ENCODE measurements at regions of chr12 and their contacts with region 1.

Region 1: DNA sequence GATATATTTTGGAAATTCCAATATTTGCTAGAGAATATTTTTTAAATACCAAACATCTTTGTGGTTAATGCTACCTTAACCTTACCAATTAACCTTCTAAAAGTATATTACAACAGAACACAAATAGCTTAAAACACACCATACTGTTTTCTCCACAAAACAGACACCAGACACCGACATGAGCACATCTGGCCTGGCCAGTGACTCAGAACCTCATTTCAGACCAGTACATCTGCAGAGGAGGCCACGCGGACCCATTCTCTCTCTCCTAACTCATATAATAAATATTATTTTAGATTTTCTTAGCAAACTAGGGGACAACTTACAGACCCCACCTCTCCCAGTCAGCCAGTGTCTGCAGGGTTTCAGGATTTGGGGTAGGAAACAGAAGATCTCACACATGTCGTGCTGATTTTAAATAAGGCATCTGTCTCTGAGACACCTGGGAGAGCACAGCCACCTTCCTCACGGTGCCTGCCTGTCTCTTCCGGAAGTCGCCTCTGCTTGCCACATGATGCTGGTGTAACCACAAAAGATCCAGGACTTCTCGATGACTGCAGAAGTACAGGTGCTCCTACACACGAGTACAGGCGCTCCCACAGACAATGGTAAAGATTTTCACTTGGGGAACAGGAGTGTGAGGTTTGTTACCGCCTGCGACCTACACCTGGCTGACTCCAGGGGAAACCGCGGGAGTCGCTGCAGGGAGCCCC is 9.7 kb upstream of the ANKLE2 start:
- DNase-seq: peak in 8 of 9 donors; percentile 38 to 82 (median 76)
- ATAC-seq: peak; percentile 80
- H3K4me3 ChIP-seq: no peak overlapping the region
- H3K4me3 Mint-ChIP-seq: peak overlapping the region; percentile 66 to 82 (median 73)
- H3K27ac ChIP-seq: peak overlapping the region; percentile 69
- H3K27ac Mint-ChIP-seq: peak overlapping the region; percentile 62 to 93 (median 84)
- H3K4me1 ChIP-seq: peaks cover 4 to 68% of the 10 kb centered on the region in 2 donors
- H3K4me1 Mint-ChIP-seq: peaks cover 29 to 89% (median 73%) of the 10 kb centered on the region in 7 donors
- H3K27me3 ChIP-seq: no peaks in the 10 kb centered on the region
- H3K27me3 Mint-ChIP-seq: no peaks in the 10 kb centered on the region

Region 2: DNA sequence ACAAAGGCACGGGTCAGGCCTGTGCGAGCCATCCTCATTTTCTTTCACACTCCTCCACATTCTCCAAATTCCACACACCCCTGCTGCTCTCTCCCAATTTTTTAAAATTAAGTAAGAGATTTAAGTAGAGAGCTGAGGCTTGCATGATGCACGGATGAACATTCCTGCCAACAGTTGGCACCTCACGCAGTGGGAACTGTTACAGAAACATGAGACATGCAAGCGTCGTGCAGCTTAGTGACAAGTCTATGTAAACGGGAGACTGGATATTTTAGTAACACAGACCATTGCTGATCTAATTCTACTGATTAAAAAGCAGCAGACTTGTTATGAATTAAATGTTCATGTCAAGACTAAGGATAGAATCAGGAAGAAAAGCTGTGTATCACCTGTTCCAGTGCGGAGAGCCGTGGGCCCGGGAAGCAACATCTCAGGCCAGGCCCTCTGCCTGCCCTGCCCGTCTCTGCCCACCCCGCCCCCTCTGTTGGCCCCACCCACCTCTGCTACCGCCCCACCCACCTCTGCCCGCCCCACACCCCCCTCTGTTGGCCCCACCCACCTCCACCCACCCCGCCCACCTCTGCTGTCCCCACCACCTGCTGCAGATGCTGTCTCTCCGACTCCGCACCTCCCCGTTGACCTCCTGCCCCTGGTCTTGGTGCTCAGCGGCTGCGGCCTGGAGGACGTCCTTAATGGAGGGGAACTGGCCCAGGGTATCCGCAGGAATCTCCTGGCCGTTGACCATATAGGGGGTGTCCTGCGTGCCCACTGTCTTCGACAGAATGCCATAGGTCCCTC is 36.2 kb after region 1 on chr12:
- CTCF ChIA-PET with region 1: interaction called, 7 read pairs
- POLR2A ChIA-PET with region 1: no interaction called
- intact Hi-C with region 1: loop called (anchors 1 to 2 kb)
- DNase-seq: no peak
- ATAC-seq: no peak
- H3K4me3 ChIP-seq: no peak overlapping the region
- H3K4me3 Mint-ChIP-seq: peak overlapping the region in 5 of 10 donors; percentile 35 to 68 (median 55)
- H3K27ac ChIP-seq: no peak overlapping the region
- H3K27ac Mint-ChIP-seq: peak overlapping the region in 3 of 9 donors; percentile 38 to 65 (median 45)
- H3K4me1 ChIP-seq: peaks cover 0 to 12% of the 10 kb centered on the region in 2 donors
- H3K4me1 Mint-ChIP-seq: peaks cover 13 to 33% (median 23%) of the 10 kb centered on the region in 7 donors
- H3K27me3 ChIP-seq: no peaks in the 10 kb centered on the region
- H3K27me3 Mint-ChIP-seq: no peaks in the 10 kb centered on the region

Region 3: DNA sequence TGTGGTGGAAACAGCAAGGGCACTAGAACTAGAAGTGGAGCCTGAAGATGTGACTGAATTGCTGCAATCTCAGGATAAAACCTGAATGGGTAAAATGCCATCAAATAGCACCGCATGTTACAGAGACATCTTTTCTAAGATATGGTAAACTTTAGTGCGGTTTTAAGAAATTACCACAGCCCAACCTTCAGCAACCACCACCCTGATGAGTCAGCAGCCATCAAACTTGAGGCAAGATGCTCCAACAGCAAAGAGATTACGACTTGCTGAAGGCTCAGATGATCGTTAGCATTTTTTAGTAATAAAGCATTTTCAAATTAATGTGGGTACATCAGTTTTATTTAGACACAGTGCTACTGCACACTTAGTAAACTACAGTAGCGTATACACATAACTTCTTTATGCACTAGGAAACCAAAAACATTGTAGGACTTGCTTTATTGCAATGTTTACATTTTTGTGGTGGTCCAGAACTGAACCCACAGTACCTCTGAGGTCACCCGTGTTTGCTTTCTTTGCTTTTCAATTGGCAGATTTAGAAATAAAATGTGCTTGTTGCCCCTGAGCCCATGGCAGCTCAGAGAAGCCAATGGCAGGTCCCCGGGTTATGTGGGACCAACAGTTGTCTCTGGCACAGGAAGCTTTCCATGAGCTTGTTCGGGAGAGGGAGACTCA is 41.5 kb after region 1 on chr12:
- CTCF ChIA-PET with region 1: interaction called, 3 read pairs
- POLR2A ChIA-PET with region 1: no interaction called
- intact Hi-C with region 1: loop called (anchors 1 to 2 kb)
- DNase-seq: no peak
- ATAC-seq: no peak
- H3K4me3 ChIP-seq: no peak overlapping the region
- H3K4me3 Mint-ChIP-seq: no peak overlapping the region
- H3K27ac ChIP-seq: no peak overlapping the region
- H3K27ac Mint-ChIP-seq: no peak overlapping the region
- H3K4me1 ChIP-seq: peaks cover 0 to 5% of the 10 kb centered on the region in 2 donors
- H3K4me1 Mint-ChIP-seq: peaks cover 2 to 18% (median 5%) of the 10 kb centered on the region in 7 donors
- H3K27me3 ChIP-seq: no peaks in the 10 kb centered on the region
- H3K27me3 Mint-ChIP-seq: no peaks in the 10 kb centered on the region

Region 4: DNA sequence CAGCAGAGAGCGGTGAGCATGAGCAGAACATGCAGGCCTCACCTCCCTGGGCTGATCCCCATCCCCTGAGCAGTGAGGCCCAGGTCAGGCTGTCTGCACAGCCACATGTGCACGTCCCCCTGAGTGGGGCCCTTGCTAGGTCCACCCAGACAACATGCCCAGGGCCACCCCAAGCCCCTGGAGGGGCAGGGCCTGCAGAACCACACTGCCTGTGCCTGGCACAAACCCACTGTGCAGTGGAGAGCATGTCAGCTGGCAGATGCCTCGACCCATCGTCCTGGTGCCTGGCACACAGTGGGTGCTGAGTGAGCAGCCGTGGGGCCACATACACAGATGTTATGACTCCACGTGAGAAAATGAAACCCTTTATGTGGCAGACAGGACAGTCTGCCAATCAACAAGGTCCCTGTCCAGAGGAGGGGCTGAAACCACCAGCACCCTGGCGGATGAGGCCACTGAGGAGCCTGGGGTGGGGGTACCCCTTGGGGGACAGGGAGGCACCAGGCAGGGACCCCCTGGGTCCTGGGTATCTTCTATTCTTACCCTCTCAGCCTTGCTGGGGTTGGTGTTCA is 456.1 kb after region 1 on chr12:
- CTCF ChIA-PET with region 1: no interaction called
- POLR2A ChIA-PET with region 1: no interaction called
- intact Hi-C with region 1: no loop called
- DNase-seq: no peak
- ATAC-seq: no peak
- H3K4me3 ChIP-seq: no peak overlapping the region
- H3K4me3 Mint-ChIP-seq: no peak overlapping the region
- H3K27ac ChIP-seq: no peak overlapping the region
- H3K27ac Mint-ChIP-seq: no peak overlapping the region
- H3K4me1 ChIP-seq: no peaks in the 10 kb centered on the region
- H3K4me1 Mint-ChIP-seq: peaks cover 0 to 2% (median 0%) of the 10 kb centered on the region in 7 donors
- H3K27me3 ChIP-seq: no peaks in the 10 kb centered on the region
- H3K27me3 Mint-ChIP-seq: peaks cover 0 to 25% (median 5%) of the 10 kb centered on the region in 5 donors